GM12878 (cell line): ENCODE measurements at regions of chr4 and their contacts with region 1.

Region 1: DNA sequence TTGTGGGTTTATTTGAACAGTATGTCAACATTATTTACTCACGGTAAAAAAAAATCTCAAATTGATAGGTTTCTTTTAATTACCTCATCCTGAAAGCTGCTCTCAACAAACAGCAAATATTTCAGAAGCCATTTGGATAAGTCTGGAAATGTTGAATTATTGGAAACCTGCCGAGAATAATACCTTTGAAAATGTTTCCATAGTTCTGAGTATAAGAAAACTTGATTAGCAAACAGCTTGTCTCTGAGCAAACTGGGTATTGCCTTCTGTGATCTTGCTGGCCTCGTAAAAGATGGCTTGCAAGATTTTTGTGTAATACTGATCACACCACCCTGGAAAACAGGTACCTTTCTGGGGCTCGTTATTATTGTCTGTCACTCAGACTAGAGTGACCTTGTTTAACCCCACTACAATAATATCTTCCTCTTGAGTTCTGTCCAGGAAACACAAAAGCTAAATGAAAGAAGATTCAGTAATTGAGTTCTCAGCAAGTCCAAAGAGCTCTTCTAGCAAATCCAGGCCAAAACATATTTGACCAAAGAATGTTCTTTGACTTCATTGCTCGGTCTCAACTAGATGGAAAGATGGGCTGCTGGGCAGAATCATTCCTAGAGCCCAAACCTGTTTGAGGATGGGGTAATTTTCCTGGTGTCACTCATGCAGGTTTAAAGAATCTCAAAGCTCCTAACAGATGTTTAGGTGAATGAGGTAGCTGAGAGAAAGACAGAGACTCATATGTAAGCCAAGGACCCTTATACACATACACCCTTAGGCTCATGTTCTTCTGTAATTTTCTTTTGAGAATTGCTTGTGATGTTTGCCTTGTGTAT is 255.6 kb upstream of the JADE1 start:
- DNase-seq: no peak
- ATAC-seq: no peak
- H3K4me3 ChIP-seq: peak overlapping the region; percentile 74
- H3K27ac ChIP-seq: no peak overlapping the region
- H3K4me1 ChIP-seq: peaks cover 9% of the 10 kb centered on the region; the same call in 1 of the 2 replicates
- H3K27me3 ChIP-seq: no peaks in the 10 kb centered on the region
- CTCF ChIP-seq: no peak
- EP300 ChIP-seq: no peak
- POLR2A ChIP-seq: no peak
- RAD21 ChIP-seq: no peak

Region 2: DNA sequence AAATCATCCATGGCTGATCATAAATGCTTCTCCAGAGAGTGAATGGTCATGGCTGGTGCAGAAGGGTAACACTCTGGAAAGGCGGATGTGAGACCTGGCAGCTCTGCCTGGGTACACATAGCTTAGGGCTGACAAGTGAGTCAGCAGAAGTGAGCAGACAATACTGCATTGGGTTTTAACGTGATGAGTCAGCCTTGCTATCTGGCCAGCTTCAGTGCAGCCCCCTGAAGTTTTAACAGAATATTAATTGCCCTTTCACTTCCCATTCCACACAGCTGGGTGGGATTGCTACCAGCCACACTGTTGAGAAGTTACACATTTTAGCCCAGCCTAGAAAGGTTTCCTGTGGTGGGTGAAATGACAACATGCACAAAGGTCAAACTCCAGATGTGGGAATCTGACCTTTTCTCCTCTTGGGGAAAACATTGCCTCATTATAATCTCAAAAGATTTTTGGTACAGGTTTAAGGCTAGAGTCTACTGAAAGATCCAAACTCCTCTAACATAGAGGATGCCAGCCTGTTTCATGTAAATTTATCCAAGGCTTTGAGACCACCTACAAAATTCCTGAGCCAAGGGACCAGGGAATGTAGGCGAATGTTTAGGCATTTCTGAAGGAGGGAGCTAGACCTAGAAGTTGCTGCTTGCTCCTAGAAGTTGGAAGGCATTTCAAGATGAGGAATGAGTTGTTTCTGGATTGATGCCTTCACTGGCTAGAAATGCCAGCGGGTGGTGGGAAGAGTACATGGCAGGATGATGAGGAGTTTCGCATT is 36.0 kb before region 1 on chr4:
- CTCF ChIA-PET with region 1: interaction called, 13 read pairs
- POLR2A ChIA-PET with region 1: interaction called, 3 read pairs
- RAD21 ChIA-PET with region 1: interaction called, 14 read pairs
- SMC1A ChIA-PET with region 1: interaction called, 25 read pairs
- in situ Hi-C with region 1: no loop called
- intact Hi-C with region 1: no loop called
- DNase-seq: peak; percentile 94
- ATAC-seq: peak; percentile 98
- H3K4me3 ChIP-seq: no peak overlapping the region
- H3K27ac ChIP-seq: peak overlapping the region; percentile 66
- H3K4me1 ChIP-seq: peaks cover 23% of the 10 kb centered on the region
- H3K27me3 ChIP-seq: no peaks in the 10 kb centered on the region
- CTCF ChIP-seq: no peak
- EP300 ChIP-seq: peak; percentile 72 to 93; a peak in 3 of 4 replicates
- POLR2A ChIP-seq: no peak
- RAD21 ChIP-seq: no peak

Region 3: GRCh38 chr4:128528793-128529553 is 24.9 kb before region 1 on chr4:
- CTCF ChIA-PET with region 1: interaction called, 3 read pairs
- POLR2A ChIA-PET with region 1: interaction called, 5 read pairs
- RAD21 ChIA-PET with region 1: interaction called, 10 read pairs
- SMC1A ChIA-PET with region 1: interaction called, 11 read pairs
- in situ Hi-C with region 1: no loop called
- intact Hi-C with region 1: no loop called
- DNase-seq: no peak
- ATAC-seq: no peak
- H3K4me3 ChIP-seq: no peak overlapping the region
- H3K27ac ChIP-seq: no peak overlapping the region
- H3K4me1 ChIP-seq: no peaks in the 10 kb centered on the region
- H3K27me3 ChIP-seq: no peaks in the 10 kb centered on the region
- CTCF ChIP-seq: no peak
- EP300 ChIP-seq: no peak
- POLR2A ChIP-seq: no peak
- RAD21 ChIP-seq: no peak

Region 4: DNA sequence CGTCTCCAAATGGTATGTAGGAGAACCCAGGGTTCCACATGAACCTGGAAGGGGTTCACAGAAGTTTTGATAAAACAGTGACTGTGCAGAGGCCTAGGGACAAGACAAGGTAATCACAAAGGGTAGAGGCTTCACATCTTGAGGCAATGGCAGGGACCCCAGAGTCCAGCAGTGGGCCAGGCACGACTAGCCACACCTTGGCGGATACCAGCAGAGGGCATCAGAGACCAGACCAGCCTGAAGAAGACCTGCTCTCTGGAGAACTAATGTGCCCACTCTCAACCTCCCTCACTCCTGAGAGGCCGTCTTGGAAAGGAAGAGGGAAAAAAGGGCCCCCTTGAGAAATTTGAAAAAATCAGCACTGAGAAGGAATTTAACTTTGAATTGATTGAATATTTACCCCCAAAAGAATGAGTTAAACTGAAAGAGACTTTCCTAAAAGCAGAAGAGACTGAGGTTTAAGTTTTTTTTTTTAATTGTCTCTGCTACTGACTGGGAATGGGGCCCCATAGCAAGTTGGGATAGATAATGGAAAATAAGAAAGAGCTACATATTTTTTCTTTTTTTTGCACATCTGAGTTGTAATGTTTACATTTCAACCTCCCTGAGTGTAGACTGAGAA is 11.8 kb after region 1 on chr4:
- CTCF ChIA-PET with region 1: interaction called, 11 read pairs
- POLR2A ChIA-PET with region 1: interaction called, 3 read pairs
- RAD21 ChIA-PET with region 1: interaction called, 6 read pairs
- SMC1A ChIA-PET with region 1: interaction called, 17 read pairs
- in situ Hi-C with region 1: no loop called
- intact Hi-C with region 1: no loop called
- DNase-seq: no peak
- ATAC-seq: peak; percentile 92
- H3K4me3 ChIP-seq: no peak overlapping the region
- H3K27ac ChIP-seq: no peak overlapping the region
- H3K4me1 ChIP-seq: no peaks in the 10 kb centered on the region
- H3K27me3 ChIP-seq: no peaks in the 10 kb centered on the region; a peak in 1 of 4 replicates
- CTCF ChIP-seq: peak; percentile 49 to 71 (median 55)
- EP300 ChIP-seq: no peak
- POLR2A ChIP-seq: no peak
- RAD21 ChIP-seq: peak; percentile 69